ENCODE measurements at regions of chr4 and their contacts with region 1.

Region 1: GRCh38 chr4:119286377-119287002 is 35.4 kb downstream of the FABP2 start:
- DNase-seq: no peak
- ATAC-seq: no peak
- H3K4me3 Mint-ChIP-seq: no peak overlapping the region
- H3K27ac Mint-ChIP-seq: no peak overlapping the region
- H3K4me1 Mint-ChIP-seq: peaks cover 14% of the 10 kb centered on the region
- H3K27me3 Mint-ChIP-seq: no peaks in the 10 kb centered on the region
- CTCF ChIP-seq: peak; percentile 66

Region 2: GRCh38 chr4:118740869-118741268 is 545.6 kb before region 1 on chr4:
- CTCF ChIA-PET with region 1: interaction called, 4 read pairs
- POLR2A ChIA-PET with region 1: no interaction called
- intact Hi-C with region 1: loop called (anchors 5 kb)
- DNase-seq: no peak
- ATAC-seq: no peak
- H3K4me3 Mint-ChIP-seq: no peak overlapping the region
- H3K27ac Mint-ChIP-seq: no peak overlapping the region
- H3K4me1 Mint-ChIP-seq: no peaks in the 10 kb centered on the region
- H3K27me3 Mint-ChIP-seq: no peaks in the 10 kb centered on the region
- CTCF ChIP-seq: peak; percentile 37

Region 3: DNA sequence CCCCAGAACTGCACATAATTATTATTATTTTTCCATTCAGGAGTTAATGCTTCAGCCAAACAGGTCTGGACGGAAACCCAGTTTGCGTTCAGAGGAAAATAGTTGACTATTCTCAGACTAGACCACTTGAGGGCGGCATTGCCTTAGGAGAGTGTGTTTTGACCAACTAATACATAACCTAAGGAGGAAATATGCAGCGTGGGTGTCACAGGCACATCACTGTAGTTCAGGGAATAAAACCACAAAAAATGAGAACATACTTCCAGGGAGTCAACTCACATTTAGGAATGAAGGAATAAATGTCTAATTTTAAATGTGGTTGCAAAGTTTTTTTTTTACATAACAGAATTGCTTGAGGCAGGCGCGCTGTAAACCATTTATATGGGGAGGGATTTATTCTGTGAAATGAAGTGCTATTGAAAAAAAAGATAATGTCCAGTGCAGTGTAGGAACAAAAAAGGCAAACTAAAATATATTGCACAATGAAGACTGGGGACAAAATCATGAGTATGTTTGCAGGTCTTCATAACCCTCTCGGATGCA is 304.6 kb before region 1 on chr4:
- CTCF ChIA-PET with region 1: interaction called, 4 read pairs
- POLR2A ChIA-PET with region 1: no interaction called
- intact Hi-C with region 1: loop called (anchors 1 kb)
- DNase-seq: no peak
- ATAC-seq: peak; percentile 57
- H3K4me3 Mint-ChIP-seq: no peak overlapping the region
- H3K27ac Mint-ChIP-seq: no peak overlapping the region
- H3K4me1 Mint-ChIP-seq: no peaks in the 10 kb centered on the region
- H3K27me3 Mint-ChIP-seq: peaks cover 4% of the 10 kb centered on the region
- CTCF ChIP-seq: no peak

Region 4: DNA sequence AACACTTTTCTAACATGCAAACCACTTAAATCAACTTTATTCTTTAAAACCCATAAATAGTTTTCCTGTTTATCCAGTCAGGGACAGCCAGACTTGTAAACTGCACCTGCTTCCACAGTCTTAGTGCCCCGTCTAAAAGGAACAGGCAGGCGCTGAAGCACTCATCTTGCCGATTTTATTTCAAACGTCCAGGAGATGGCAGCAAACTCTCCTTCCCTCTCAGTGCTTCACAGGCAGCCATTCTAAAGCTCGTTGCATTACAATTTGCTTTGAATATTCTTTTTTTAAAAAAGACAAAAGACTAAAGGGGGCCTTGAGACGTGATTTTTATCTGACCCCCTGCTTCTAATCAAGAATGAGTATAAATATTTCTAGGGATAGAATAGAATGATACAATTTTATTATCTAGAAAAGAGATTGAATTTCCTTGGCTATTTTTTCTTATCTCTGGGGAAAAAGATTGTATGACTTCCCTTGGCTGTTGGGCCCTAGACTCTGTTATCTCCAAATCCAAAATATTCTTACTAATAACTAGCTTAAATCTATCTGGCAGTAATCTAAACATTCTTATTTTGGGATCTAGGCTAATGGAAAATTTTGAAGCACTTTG is 244.4 kb before region 1 on chr4:
- CTCF ChIA-PET with region 1: interaction called, 27 read pairs
- POLR2A ChIA-PET with region 1: no interaction called
- intact Hi-C with region 1: loop called (anchors 1 kb)
- DNase-seq: no peak
- ATAC-seq: peak; percentile 83
- H3K4me3 Mint-ChIP-seq: no peak overlapping the region
- H3K27ac Mint-ChIP-seq: no peak overlapping the region
- H3K4me1 Mint-ChIP-seq: peaks cover 5% of the 10 kb centered on the region
- H3K27me3 Mint-ChIP-seq: no peaks in the 10 kb centered on the region
- CTCF ChIP-seq: no peak

Region 5: DNA sequence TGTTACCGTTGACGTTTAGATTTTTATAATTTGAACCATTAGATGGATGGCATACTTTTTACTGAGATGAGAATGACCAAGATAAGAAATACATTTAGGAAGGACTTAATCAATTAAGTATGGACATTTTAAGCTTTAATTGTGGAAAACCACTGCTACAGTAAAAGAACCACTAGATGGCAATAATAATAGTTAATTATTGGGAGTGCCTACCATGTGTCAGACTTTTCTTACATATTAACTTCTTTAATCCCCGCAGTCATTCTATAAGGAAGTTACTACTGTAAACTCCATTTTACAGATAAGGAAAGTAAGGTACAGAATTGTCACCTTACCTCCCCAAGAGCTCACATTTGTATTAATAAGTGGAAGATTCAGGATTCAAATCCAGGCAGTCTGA is 199.4 kb before region 1 on chr4:
- CTCF ChIA-PET with region 1: interaction called, 3 read pairs
- POLR2A ChIA-PET with region 1: no interaction called
- intact Hi-C with region 1: loop called (anchors 1 kb)
- DNase-seq: no peak
- ATAC-seq: no peak
- H3K4me3 Mint-ChIP-seq: no peak overlapping the region
- H3K27ac Mint-ChIP-seq: no peak overlapping the region
- H3K4me1 Mint-ChIP-seq: peaks cover 20% of the 10 kb centered on the region
- H3K27me3 Mint-ChIP-seq: no peaks in the 10 kb centered on the region
- CTCF ChIP-seq: no peak

Region 6: GRCh38 chr4:119244832-119245231 is 41.7 kb before region 1 on chr4:
- CTCF ChIA-PET with region 1: no interaction called
- POLR2A ChIA-PET with region 1: no interaction called
- intact Hi-C with region 1: loop called (anchors 5 kb)
- DNase-seq: no peak
- ATAC-seq: peak; percentile 14
- H3K4me3 Mint-ChIP-seq: no peak overlapping the region
- H3K27ac Mint-ChIP-seq: no peak overlapping the region
- H3K4me1 Mint-ChIP-seq: peaks cover 15% of the 10 kb centered on the region
- H3K27me3 Mint-ChIP-seq: no peaks in the 10 kb centered on the region
- CTCF ChIP-seq: no peak

Measured in activated B cell treated with CpG ODN at 0.5 μM for 24 hours (primary cell).